ENCODE measurements at regions of chr5 and their contacts with region 1.

Region 1: DNA sequence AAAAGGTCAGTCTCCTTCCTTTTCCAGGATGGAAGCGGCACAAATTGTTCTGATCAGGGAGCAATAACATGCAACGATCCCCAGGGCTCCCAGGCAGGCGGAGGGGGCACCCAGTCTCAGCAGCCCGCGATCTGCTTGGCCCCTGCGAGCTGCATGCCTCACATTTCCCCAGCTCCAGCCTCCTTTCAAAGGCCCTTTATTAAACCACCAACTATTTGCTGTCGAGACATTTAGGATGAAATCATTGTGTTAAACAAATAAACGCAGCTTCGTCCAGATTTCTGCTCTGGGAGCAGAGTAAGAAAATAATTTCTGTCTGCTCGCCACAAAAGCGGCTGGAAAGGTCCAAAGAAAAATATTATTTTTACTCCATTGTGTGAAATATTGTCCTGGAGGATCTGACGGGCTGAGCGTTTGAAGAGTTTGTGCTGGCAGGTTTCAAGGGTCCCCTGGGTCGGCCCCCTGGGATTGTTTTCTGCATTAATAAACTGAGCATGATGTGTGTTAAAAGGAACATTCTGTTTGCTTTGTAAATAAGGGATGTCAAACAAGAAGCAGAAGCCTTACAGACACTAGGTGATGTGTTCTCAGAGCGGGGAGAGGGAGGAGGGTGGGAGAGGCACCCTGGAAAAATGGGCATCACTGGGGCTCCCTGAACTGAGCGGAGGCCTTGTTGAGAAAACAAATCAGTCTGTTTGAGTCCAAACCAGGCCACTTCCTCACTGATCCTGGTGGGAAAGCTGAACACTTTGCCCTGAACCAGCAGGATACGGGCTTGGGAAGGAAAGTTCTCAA is 110.1 kb downstream of the FOXD1 start:
- DNase-seq: no peak
- ATAC-seq: peak; percentile 82
- H3K4me3 ChIP-seq: 0 out of 4 replicates have a peak overlapping the region, but pooled peaks of 1 of the 2 experiments have one; percentile 10
- H3K27ac ChIP-seq: peak overlapping the region; percentile 48
- H3K4me1 ChIP-seq: peaks cover 12% of the 10 kb centered on the region
- H3K27me3 ChIP-seq: no peaks in the 10 kb centered on the region
- CTCF ChIP-seq: no peak

Region 2: GRCh38 chr5:73321757-73322436 is 16.6 kb before region 1 on chr5:
- CTCF ChIA-PET with region 1: no interaction called
- POLR2A ChIA-PET with region 1: interaction called, 12 read pairs
- in situ Hi-C with region 1: no loop called
- intact Hi-C with region 1: no loop called
- DNase-seq: peak; percentile 80
- ATAC-seq: peak; percentile 65; the same call in 1 of the 2 replicates
- H3K4me3 ChIP-seq: no peak overlapping the region
- H3K27ac ChIP-seq: no peak overlapping the region
- H3K4me1 ChIP-seq: no peaks in the 10 kb centered on the region
- H3K27me3 ChIP-seq: no peaks in the 10 kb centered on the region
- CTCF ChIP-seq: no peak

Region 3: GRCh38 chr5:73615085-73615484 is 276.6 kb after region 1 on chr5:
- CTCF ChIA-PET with region 1: no interaction called
- POLR2A ChIA-PET with region 1: no interaction called
- in situ Hi-C with region 1: no loop called
- intact Hi-C with region 1: no loop called
- DNase-seq: no peak
- ATAC-seq: no peak
- H3K4me3 ChIP-seq: no peak overlapping the region
- H3K27ac ChIP-seq: no peak overlapping the region
- H3K4me1 ChIP-seq: peaks cover 19% of the 10 kb centered on the region
- H3K27me3 ChIP-seq: no peaks in the 10 kb centered on the region
- CTCF ChIP-seq: no peak

Measured in Panc1 (cell line).